CD4-positive, alpha-beta memory T cell (primary cell): ENCODE measurements at regions of chr16 and their contacts with region 1.

Region 1: GRCh38 chr16:30395155-30395991 is at the start of gene ZNF48:
- DNase-seq: peak in 4 of 5 donors; percentile 44 to 65 (median 53)
- H3K4me3 ChIP-seq: peak within 1 kb of the TSS; percentile 18 to 73
- H3K4me3 Mint-ChIP-seq: peak within 1 kb of the TSS; percentile 83 to 96 (median 89)
- H3K27ac ChIP-seq: peak within 1 kb of the TSS; percentile 56
- H3K27ac Mint-ChIP-seq: peak within 1 kb of the TSS; percentile 58 to 92 (median 84)
- H3K4me1 ChIP-seq: peaks cover 32% of the 10 kb centered on the region
- H3K4me1 Mint-ChIP-seq: peaks cover 15 to 39% (median 26%) of the 10 kb centered on the region in 4 donors
- H3K27me3 ChIP-seq: no peaks in the 10 kb centered on the region
- H3K27me3 Mint-ChIP-seq: no peaks in the 10 kb centered on the region
- total RNA-seq, gene ZNF48: 15.8 to 16.7 TPM

Region 2: DNA sequence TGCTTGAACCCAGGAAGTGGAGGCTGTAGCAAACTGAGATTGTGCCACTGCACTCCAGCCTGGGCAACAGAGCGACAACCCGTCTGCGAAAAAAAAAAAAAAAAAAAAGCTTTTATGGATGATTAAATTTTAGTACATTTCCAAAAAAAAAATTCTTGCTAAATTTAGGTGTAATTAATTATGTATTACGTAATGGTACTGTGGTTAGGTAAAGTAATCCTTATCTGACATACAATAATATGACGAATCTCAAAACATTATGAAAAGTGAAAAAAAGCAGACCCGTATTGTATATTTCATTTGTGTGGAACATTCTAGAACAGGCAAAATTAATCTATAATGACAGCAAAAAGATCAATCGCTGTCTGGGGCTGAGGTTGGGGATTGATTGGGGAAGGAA is 222.3 kb before region 1 on chr16:
- CTCF ChIA-PET with region 1: no interaction called
- POLR2A ChIA-PET with region 1: no interaction called
- intact Hi-C with region 1: no loop called
- DNase-seq: no peak
- H3K4me3 ChIP-seq: no peak overlapping the region
- H3K4me3 Mint-ChIP-seq: no peak overlapping the region
- H3K27ac ChIP-seq: no peak overlapping the region
- H3K27ac Mint-ChIP-seq: no peak overlapping the region
- H3K4me1 ChIP-seq: no peaks in the 10 kb centered on the region
- H3K4me1 Mint-ChIP-seq: peaks cover 0 to 2% (median under 1%) of the 10 kb centered on the region in 4 donors
- H3K27me3 ChIP-seq: no peaks in the 10 kb centered on the region
- H3K27me3 Mint-ChIP-seq: no peaks in the 10 kb centered on the region

Region 3: GRCh38 chr16:30370444-30371247 is 24.7 kb before region 1 on chr16 and contains the start of gene TBC1D10B:
- CTCF ChIA-PET with region 1: interaction called, 12 read pairs
- POLR2A ChIA-PET with region 1: interaction called, 25 read pairs
- intact Hi-C with region 1: no loop called
- DNase-seq: peak; percentile 99 to 100 (median 100)
- H3K4me3 ChIP-seq: peak within 1 kb of the TSS; percentile 67 to 88
- H3K4me3 Mint-ChIP-seq: peak within 1 kb of the TSS; percentile 87 to 94 (median 90)
- H3K27ac ChIP-seq: peak within 1 kb of the TSS; percentile 72
- H3K27ac Mint-ChIP-seq: peak within 1 kb of the TSS; percentile 83 to 99 (median 95)
- H3K4me1 ChIP-seq: peaks cover 46% of the 10 kb centered on the region
- H3K4me1 Mint-ChIP-seq: peaks cover 43 to 60% (median 49%) of the 10 kb centered on the region in 4 donors
- H3K27me3 ChIP-seq: no peaks in the 10 kb centered on the region
- H3K27me3 Mint-ChIP-seq: peaks cover 0 to 2% of the 10 kb centered on the region in 2 donors
- total RNA-seq, gene TBC1D10B: 47.0 to 55.3 TPM

Region 4: DNA sequence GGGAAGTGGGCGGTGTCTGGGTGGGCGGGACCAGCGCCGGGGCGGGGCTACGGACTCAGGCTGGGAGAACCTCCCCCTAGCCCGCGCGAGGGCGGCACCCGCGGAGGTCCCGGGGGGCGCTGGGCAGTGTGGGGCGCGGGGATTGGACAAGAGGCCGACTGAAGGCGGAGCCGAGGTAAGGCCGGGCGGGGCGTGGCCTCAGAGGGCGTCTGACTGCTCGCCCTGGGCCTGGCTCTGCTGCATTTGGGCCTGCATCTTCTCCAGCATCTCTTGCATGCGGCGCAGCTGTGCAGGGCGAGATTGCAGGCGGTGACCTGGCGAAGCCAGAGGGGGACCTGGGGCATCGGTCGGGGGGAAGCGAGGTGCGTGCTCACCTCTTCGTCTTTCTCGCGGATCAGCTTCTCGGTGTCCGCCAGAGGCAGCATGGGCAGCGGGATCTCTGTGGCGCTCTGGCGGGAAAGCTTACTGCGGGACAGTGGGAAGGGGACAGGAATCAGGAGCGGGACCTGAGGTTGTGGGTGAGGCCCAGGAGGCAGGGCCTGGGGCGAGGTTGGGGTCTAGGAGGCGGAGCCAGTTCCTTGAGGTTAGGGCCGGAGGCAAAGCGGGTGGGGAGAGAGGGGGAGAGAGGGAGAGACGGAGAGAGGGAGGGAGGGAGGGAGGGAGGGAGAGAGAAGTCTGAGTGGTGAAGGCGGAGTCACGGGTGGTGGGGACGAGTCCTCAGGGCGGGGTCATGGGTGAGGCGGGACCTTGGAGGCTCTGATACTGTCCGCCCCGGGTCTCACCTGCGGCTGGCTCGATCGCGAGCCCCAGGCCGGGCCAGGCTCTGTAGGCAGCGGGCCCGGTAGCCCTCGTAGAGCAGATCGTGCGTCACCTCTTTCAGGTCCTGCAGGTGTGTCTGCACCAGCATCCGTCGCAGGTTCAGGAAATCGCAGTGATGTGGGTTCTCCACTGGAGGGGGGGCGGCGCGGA is 16.9 kb before region 1 on chr16:
- CTCF ChIA-PET with region 1: interaction called, 33 read pairs
- POLR2A ChIA-PET with region 1: interaction called, 540 read pairs
- intact Hi-C with region 1: loop called (anchors 1 kb)
- DNase-seq: peak; percentile 98 to 99 (median 99)
- H3K4me3 ChIP-seq: peak overlapping the region; percentile 84 to 91
- H3K4me3 Mint-ChIP-seq: peak overlapping the region; percentile 91 to 100 (median 96)
- H3K27ac ChIP-seq: peak overlapping the region; percentile 96
- H3K27ac Mint-ChIP-seq: peak overlapping the region; percentile 97 to 100 (median 100)
- H3K4me1 ChIP-seq: peaks cover 69% of the 10 kb centered on the region
- H3K4me1 Mint-ChIP-seq: peaks cover 32 to 71% (median 48%) of the 10 kb centered on the region in 4 donors
- H3K27me3 ChIP-seq: no peaks in the 10 kb centered on the region
- H3K27me3 Mint-ChIP-seq: no peaks in the 10 kb centered on the region